ENCODE measurements at regions of chr5 and their contacts with region 1.

Region 1: DNA sequence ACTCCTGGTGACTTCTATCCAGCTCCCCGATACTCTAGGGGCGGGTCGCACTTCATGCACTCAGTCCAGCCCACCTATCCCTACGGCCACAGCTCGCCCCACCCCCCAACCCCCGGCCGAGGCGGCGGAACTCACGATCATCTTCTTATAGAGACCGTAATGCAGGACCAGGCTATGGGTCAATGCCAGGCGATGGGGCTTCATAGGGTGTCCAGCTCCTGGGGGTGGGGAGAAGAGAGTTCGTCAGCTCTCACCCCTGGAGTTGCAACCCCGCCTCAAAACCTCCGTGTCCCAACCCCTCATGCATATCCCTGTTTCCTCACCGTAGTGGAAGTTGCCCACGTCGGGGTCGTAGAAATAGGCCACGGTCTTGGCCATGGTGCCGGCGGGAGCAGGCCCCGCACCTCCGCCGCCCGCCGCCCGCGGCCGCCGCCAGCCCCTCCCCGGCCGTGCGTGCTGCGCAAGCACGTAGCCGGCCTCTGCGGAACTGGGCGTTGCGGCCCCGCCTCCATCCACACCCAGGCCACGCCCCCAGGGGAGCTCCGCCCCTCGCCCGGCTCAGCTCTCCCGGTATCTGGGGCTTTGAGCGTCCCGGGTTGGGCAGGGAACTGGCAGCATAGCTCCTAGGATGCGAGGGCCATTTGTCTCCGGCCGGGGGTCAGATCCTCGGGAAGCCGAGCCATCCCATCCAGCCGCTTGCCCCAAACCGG is at the starts of genes HDAC3 and RELL2:
- DNase-seq: peak; percentile 86 to 99 (median 94)
- ATAC-seq: peak; percentile 98
- H3K4me3 ChIP-seq: peak within 1 kb of the TSS; percentile 81
- H3K4me3 Mint-ChIP-seq: peak within 1 kb of the TSS; percentile 89 to 98 (median 92)
- H3K27ac ChIP-seq: peak within 1 kb of the TSS; percentile 88
- H3K27ac Mint-ChIP-seq: peak within 1 kb of the TSS; percentile 72 to 95 (median 92)
- H3K4me1 ChIP-seq: peaks cover 23 to 24% of the 10 kb centered on the region in 2 donors
- H3K4me1 Mint-ChIP-seq: peaks cover 35 to 56% (median 46%) of the 10 kb centered on the region in 7 donors
- H3K27me3 ChIP-seq: no peaks in the 10 kb centered on the region
- H3K27me3 Mint-ChIP-seq: no peaks in the 10 kb centered on the region
- total RNA-seq, gene HDAC3: 70.0 to 92.8 (median 79.0) TPM
- total RNA-seq, gene RELL2: 14.3 to 21.7 (median 17.5) TPM

Region 2: DNA sequence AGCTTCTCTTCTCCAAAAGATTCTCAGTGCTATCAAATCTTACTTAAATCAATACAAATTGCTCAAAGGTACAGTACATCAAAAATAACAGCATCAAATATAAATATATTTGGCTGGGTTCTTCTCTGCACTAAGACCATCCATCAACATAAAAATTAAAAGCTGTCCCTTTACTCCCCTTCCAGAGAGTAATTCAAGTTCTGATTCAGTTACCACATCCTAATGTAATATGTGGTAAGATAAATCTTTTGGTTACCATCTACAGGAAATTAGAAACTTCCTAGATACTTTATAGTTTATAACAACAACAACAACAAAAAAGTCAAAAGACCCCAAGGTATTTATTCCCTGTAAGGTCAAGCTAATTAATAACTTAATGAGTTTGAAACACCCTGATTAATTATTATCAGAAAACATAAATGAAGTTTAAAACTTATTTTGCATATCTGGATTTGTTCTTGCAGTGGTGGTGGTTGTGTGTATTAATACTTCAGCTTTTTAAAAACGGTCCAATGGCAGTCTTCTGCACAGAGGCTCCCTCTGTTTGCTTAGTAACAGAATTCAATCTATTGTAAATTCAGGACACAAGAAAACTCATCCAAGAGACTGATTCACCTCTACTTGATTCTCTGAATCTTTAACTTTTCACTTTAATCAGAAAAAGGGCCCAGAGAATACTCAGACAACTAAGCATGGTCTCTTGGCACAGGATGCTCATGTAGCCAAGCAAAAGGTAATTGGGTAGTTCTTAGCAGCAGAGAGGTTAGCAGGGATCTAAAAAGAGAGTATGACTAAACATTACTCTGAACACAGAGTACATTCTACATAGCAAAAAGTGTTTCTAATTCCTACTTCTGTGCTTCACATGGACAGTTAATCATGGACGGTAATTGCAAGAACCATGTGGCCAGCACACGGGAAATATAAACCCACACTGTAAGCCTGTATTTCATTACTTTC is 37.9 kb before region 1 on chr5:
- CTCF ChIA-PET with region 1: interaction called, 31 read pairs
- POLR2A ChIA-PET with region 1: interaction called, 17 read pairs
- intact Hi-C with region 1: no loop called
- DNase-seq: no peak
- ATAC-seq: peak; percentile 40
- H3K4me3 ChIP-seq: no peak overlapping the region
- H3K4me3 Mint-ChIP-seq: peak overlapping the region in 7 of 10 donors; percentile 25 to 60 (median 47)
- H3K27ac ChIP-seq: peak overlapping the region; percentile 43
- H3K27ac Mint-ChIP-seq: peak overlapping the region; percentile 56 to 92 (median 86)
- H3K4me1 ChIP-seq: peaks cover 59 to 69% of the 10 kb centered on the region in 2 donors
- H3K4me1 Mint-ChIP-seq: peaks cover 44 to 89% (median 81%) of the 10 kb centered on the region in 7 donors
- H3K27me3 ChIP-seq: no peaks in the 10 kb centered on the region
- H3K27me3 Mint-ChIP-seq: no peaks in the 10 kb centered on the region

Region 3: GRCh38 chr5:141605523-141606277 is 30.9 kb before region 1 on chr5:
- CTCF ChIA-PET with region 1: interaction called, 3 read pairs
- POLR2A ChIA-PET with region 1: interaction called, 7 read pairs
- intact Hi-C with region 1: loop called (anchors 1 kb)
- DNase-seq: peak in 8 of 9 donors; percentile 60 to 90 (median 88)
- ATAC-seq: peak; percentile 95
- H3K4me3 ChIP-seq: peak overlapping the region; percentile 37
- H3K4me3 Mint-ChIP-seq: peak overlapping the region; percentile 13 to 88 (median 80)
- H3K27ac ChIP-seq: peak overlapping the region; percentile 72
- H3K27ac Mint-ChIP-seq: peak overlapping the region; percentile 83 to 96 (median 89)
- H3K4me1 ChIP-seq: peaks cover 86 to 87% of the 10 kb centered on the region in 2 donors
- H3K4me1 Mint-ChIP-seq: peaks cover 60 to 97% (median 90%) of the 10 kb centered on the region in 7 donors
- H3K27me3 ChIP-seq: no peaks in the 10 kb centered on the region
- H3K27me3 Mint-ChIP-seq: no peaks in the 10 kb centered on the region

Region 4: GRCh38 chr5:141618804-141619554 is 17.6 kb before region 1 on chr5 and contains the start of gene DIAPH1:
- CTCF ChIA-PET with region 1: interaction called, 33 read pairs
- POLR2A ChIA-PET with region 1: interaction called, 54 read pairs
- intact Hi-C with region 1: loop called (anchors 1 kb)
- DNase-seq: peak; percentile 91 to 98 (median 96)
- ATAC-seq: peak; percentile 98
- H3K4me3 ChIP-seq: peak within 1 kb of the TSS; percentile 77
- H3K4me3 Mint-ChIP-seq: peak within 1 kb of the TSS; percentile 94 to 100 (median 100)
- H3K27ac ChIP-seq: peak within 1 kb of the TSS; percentile 97
- H3K27ac Mint-ChIP-seq: peak within 1 kb of the TSS; percentile 91 to 99 (median 95)
- H3K4me1 ChIP-seq: peaks cover 11 to 22% of the 10 kb centered on the region in 2 donors
- H3K4me1 Mint-ChIP-seq: peaks cover 44 to 61% (median 56%) of the 10 kb centered on the region in 7 donors
- H3K27me3 ChIP-seq: no peaks in the 10 kb centered on the region
- H3K27me3 Mint-ChIP-seq: no peaks in the 10 kb centered on the region
- total RNA-seq, gene DIAPH1: 163 to 278 (median 173) TPM

Region 5: DNA sequence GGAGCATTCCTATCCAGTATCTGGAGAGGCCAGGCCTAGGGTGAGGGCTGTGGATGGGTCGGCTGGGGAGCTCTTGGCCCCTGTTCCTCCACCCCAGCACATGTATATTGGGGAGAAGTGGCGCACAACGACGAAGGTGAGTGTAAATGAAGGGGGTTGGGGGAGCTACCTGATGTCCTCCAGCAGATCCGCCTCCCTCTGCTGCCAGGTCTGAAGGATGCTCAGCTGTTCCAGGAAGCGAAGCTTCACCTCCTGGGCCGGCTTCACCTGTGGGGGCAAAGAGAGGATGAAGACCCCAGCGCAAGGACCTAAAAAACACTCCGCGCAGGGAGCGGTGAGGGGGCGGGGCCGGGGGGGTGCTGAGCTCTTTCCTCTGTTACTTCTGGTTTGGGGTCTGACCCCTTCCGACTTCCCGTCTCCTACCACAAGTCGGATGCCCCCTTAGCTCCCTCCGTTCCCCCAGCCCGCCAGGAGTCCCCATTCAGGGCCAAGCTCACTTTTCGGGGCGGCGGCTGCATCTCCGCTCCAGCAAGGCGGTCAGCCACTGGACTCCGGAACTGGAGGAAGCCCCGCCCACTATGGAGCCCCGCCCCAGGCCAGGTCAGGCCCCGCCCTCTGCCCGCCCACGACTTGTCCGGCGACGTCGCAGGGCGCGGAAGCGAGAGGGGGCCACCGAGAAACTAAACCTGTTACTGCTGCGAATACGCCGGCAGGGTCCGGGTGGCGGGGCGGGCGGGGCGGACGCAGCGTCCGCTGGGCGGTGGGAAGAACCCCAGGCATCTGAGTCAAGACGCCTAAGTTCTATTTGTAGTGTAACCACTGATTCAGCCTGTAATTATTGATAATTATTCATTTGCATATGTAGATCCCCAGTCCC is 14.5 kb after region 1 on chr5 and contains the start of gene FCHSD1:
- CTCF ChIA-PET with region 1: interaction called, 5 read pairs
- POLR2A ChIA-PET with region 1: interaction called, 36 read pairs
- intact Hi-C with region 1: loop called (anchors 1 kb)
- DNase-seq: peak; percentile 64 to 88 (median 67)
- ATAC-seq: peak; percentile 98
- H3K4me3 ChIP-seq: peak within 1 kb of the TSS; percentile 62
- H3K4me3 Mint-ChIP-seq: peak within 1 kb of the TSS; percentile 60 to 97 (median 90)
- H3K27ac ChIP-seq: peak within 1 kb of the TSS; percentile 75
- H3K27ac Mint-ChIP-seq: peak within 1 kb of the TSS; percentile 56 to 95 (median 89)
- H3K4me1 ChIP-seq: peaks cover 15 to 19% of the 10 kb centered on the region in 2 donors
- H3K4me1 Mint-ChIP-seq: peaks cover 27 to 51% (median 37%) of the 10 kb centered on the region in 7 donors
- H3K27me3 ChIP-seq: no peaks in the 10 kb centered on the region
- H3K27me3 Mint-ChIP-seq: peaks cover 0 to 4% (median 0%) of the 10 kb centered on the region in 5 donors
- total RNA-seq, gene FCHSD1: 69.6 to 96.1 (median 92.3) TPM

Region 6: DNA sequence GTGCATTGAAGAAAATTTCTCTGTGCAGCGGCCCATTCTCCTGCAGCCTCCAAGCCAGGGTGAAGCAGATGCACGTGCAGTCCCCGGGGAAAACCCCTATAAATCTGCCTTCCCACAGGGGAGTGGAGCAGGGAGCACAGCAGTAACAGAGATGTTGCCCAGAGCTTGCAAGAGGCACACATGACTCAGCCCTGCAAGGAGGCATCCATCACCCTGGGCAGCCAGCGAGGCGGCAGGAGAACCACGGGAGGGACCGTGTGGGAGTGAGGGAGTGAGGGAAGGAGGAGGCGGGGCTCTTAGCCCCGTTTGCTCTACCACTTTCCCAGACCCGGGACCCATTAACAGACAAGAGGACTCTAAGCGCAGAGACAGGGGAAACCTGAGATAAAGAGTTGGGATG is 141.6 kb after region 1 on chr5:
- CTCF ChIA-PET with region 1: no interaction called
- POLR2A ChIA-PET with region 1: no interaction called
- intact Hi-C with region 1: no loop called
- DNase-seq: no peak
- ATAC-seq: no peak
- H3K4me3 ChIP-seq: no peak overlapping the region
- H3K4me3 Mint-ChIP-seq: no peak overlapping the region
- H3K27ac ChIP-seq: no peak overlapping the region
- H3K27ac Mint-ChIP-seq: no peak overlapping the region
- H3K4me1 ChIP-seq: no peaks in the 10 kb centered on the region
- H3K4me1 Mint-ChIP-seq: peaks cover 0 to 4% (median 0%) of the 10 kb centered on the region in 7 donors
- H3K27me3 ChIP-seq: no peaks in the 10 kb centered on the region
- H3K27me3 Mint-ChIP-seq: peaks cover 0 to 12% (median 4%) of the 10 kb centered on the region in 5 donors

Region 7: GRCh38 chr5:141849375-141850243 is 213.0 kb after region 1 on chr5:
- CTCF ChIA-PET with region 1: no interaction called
- POLR2A ChIA-PET with region 1: no interaction called
- intact Hi-C with region 1: loop called in 1 of 2 experiments (anchors 1 kb)
- DNase-seq: peak; percentile 41 to 77 (median 56)
- ATAC-seq: peak; percentile 82
- H3K4me3 ChIP-seq: peak overlapping the region; percentile 98
- H3K4me3 Mint-ChIP-seq: peak overlapping the region; percentile 86 to 93 (median 89)
- H3K27ac ChIP-seq: peak overlapping the region; percentile 74
- H3K27ac Mint-ChIP-seq: peak overlapping the region; percentile 54 to 98 (median 88)
- H3K4me1 ChIP-seq: no peaks in the 10 kb centered on the region
- H3K4me1 Mint-ChIP-seq: peaks cover 6 to 24% (median 12%) of the 10 kb centered on the region in 7 donors
- H3K27me3 ChIP-seq: no peaks in the 10 kb centered on the region
- H3K27me3 Mint-ChIP-seq: peaks cover 0 to 2% (median 0%) of the 10 kb centered on the region in 5 donors

Region 8: GRCh38 chr5:141923448-141924352 is 287.1 kb after region 1 on chr5 and contains the start of gene DELE1:
- CTCF ChIA-PET with region 1: no interaction called
- POLR2A ChIA-PET with region 1: interaction called, 6 read pairs
- intact Hi-C with region 1: loop called in 1 of 2 experiments (anchors 1 kb)
- DNase-seq: peak; percentile 79 to 92 (median 90)
- ATAC-seq: peak; percentile 97
- H3K4me3 ChIP-seq: peak within 1 kb of the TSS; percentile 81
- H3K4me3 Mint-ChIP-seq: peak within 1 kb of the TSS; percentile 88 to 98 (median 94)
- H3K27ac ChIP-seq: peak within 1 kb of the TSS; percentile 98
- H3K27ac Mint-ChIP-seq: peak within 1 kb of the TSS; percentile 87 to 99 (median 98)
- H3K4me1 ChIP-seq: peaks cover 10 to 14% of the 10 kb centered on the region in 2 donors
- H3K4me1 Mint-ChIP-seq: peaks cover 23 to 54% (median 36%) of the 10 kb centered on the region in 7 donors
- H3K27me3 ChIP-seq: no peaks in the 10 kb centered on the region
- H3K27me3 Mint-ChIP-seq: no peaks in the 10 kb centered on the region
- total RNA-seq, gene DELE1: 77.3 to 101 (median 88.2) TPM

Measured in naive thymus-derived CD4-positive, alpha-beta T cell (primary cell).